HCT116 (cell line): ENCODE measurements at regions of chr9 and their contacts with region 1.

Region 1: DNA sequence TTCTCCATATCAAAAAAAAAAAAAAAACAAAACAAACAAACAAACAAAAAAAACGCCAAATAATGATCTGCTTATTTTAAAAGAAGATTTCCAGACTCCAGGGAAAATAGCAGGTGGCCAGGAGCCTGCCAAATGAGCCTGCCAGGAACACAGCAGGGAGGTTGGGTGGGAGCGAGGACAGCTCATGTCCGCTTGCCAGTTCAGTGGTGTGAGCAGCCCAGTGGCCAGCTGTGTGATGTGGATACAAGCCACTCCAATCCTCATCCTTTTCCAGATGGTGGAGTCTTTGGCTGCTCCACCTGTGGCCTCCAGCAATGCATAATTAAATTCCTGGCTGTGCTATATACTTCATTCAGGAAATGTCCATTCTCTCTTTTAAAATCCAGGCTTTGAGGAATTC is 1025.1 kb upstream of the C9orf72 start:
- DNase-seq: no peak
- ATAC-seq: no peak
- H3K4me3 ChIP-seq: no peak overlapping the region
- H3K27ac ChIP-seq: no peak overlapping the region
- H3K4me1 ChIP-seq: no peaks in the 10 kb centered on the region
- H3K27me3 ChIP-seq: no peaks in the 10 kb centered on the region
- CTCF ChIP-seq: no peak
- POLR2A ChIP-seq: no peak
- RAD21 ChIP-seq: no peak

Region 2: GRCh38 chr9:28342815-28343338 is 255.5 kb before region 1 on chr9:
- CTCF ChIA-PET with region 1: no interaction called
- POLR2A ChIA-PET with region 1: no interaction called
- RAD21 ChIA-PET with region 1: no interaction called
- intact Hi-C with region 1: no loop called
- DNase-seq: no peak
- ATAC-seq: no peak
- H3K4me3 ChIP-seq: no peak overlapping the region
- H3K27ac ChIP-seq: no peak overlapping the region
- H3K4me1 ChIP-seq: no peaks in the 10 kb centered on the region
- H3K27me3 ChIP-seq: no peaks in the 10 kb centered on the region
- CTCF ChIP-seq: no peak
- POLR2A ChIP-seq: no peak
- RAD21 ChIP-seq: no peak

Region 3: DNA sequence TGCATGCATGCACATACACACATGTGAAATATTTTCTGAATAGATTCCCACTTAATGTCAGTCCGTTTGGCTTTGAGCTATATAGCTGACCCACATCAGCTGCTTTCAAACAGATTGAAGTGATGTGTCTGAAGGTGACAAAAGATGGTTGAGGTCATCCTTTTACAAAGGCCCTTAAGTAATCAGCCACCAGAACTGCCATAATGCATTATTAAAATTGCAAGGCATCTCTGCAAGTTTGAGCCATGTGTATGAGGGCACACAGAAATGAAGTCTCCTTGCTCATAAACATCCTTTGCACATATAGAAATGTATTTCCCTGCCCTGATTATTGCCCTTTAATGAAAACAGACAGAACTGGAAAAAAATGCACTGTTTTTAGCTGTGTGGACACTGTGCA is 17.9 kb after region 1 on chr9:
- CTCF ChIA-PET with region 1: no interaction called
- POLR2A ChIA-PET with region 1: no interaction called
- RAD21 ChIA-PET with region 1: no interaction called
- intact Hi-C with region 1: loop called (anchors 2 kb)
- DNase-seq: no peak
- ATAC-seq: no peak
- H3K4me3 ChIP-seq: no peak overlapping the region
- H3K27ac ChIP-seq: no peak overlapping the region
- H3K4me1 ChIP-seq: no peaks in the 10 kb centered on the region
- H3K27me3 ChIP-seq: no peaks in the 10 kb centered on the region
- CTCF ChIP-seq: no peak
- POLR2A ChIP-seq: no peak
- RAD21 ChIP-seq: no peak